ENCODE measurements at regions of chr12 and their contacts with region 1.

Region 1: DNA sequence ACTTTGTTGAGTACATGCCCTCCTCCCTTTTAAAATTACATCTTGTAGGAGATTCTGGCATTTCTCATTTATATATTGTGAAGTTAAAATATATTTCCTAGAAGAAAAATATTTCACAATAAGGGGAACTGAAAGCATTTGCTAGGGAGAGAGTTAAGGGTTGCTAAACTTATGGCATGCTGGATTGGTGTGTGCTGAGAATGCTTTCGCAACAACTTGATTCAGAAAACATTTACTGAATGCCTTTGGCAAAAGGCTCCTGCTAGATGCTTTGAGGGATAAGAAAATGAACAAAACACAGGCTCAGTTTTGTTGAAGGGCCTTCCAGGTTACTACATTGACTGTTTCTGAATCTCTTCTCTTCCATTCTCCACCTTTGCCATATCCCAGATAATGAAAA is 67.5 kb downstream of the DIP2B start:
- DNase-seq: no peak
- ATAC-seq: peak; percentile 41 to 73 (median 50)
- H3K4me3 ChIP-seq: no peak overlapping the region
- H3K27ac ChIP-seq: peak overlapping the region in 4 of 12 donors; percentile 1 to 75 (median 36)
- H3K4me1 ChIP-seq: peaks cover 9 to 85% (median 58%) of the 10 kb centered on the region in 12 donors
- H3K27me3 ChIP-seq: no peaks in the 10 kb centered on the region
- CTCF ChIP-seq: no peak
- POLR2A ChIP-seq: no peak

Region 2: GRCh38 chr12:50620109-50620977 is 48.1 kb after region 1 on chr12:
- intact Hi-C with region 1: loop called in 1 of 10 experiments (anchors 10 kb)
- DNase-seq: peak in 1 of 5 donors; percentile 44
- ATAC-seq: peak; percentile 43 to 88 (median 72)
- H3K4me3 ChIP-seq: no peak overlapping the region
- H3K27ac ChIP-seq: peak overlapping the region in 2 of 12 donors; percentile 23 to 24
- H3K4me1 ChIP-seq: peaks cover 0 to 71% (median 43%) of the 10 kb centered on the region in 12 donors
- H3K27me3 ChIP-seq: no peaks in the 10 kb centered on the region
- CTCF ChIP-seq: no peak
- POLR2A ChIP-seq: no peak

Measured in heart left ventricle (tissue), 16 donors.